ENCODE measurements at regions of chr17 and their contacts with region 1.

Region 1: DNA sequence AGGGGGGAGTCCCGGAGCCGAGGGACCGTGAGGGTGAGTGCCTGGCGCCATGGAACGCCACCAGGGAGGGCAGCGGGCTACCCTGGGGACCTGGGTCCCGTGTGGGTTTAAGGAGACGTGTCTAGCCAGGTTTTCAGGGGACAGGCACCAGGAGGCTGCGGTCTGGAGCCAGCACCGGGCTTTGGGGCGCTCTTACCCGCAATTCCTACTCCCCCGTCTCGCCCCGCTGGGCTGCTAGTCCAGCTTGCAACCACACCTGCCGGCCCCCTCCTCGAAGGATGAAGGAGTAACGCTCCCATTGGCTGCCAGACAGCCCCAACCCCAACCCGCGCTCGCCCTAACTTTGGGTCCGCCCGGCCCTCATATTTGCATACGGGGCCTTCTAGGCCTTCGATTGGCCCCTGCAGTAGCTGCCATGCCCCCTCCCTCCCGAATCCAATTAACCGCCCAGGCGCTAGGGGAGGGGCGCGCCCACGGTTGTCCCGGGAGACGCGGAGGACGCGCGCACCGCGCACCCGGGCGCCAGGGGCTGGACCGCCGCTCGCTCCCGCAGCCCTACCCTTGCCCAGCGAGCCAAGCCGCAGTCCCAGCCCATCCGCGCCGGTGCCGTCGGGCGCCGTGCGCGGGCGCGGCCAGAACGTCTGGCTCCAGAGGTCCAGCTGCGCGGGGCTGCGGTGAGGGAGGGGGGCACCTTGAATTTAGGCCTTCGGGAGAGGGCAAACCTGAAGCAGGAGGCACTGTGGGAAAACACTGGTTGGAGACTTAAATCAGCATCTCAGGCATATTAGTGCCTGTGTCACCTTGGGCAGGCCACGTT is at the start of gene TTLL6:
- DNase-seq: peak; percentile 84
- H3K4me3 ChIP-seq: peak within 1 kb of the TSS; percentile 16 to 48 (median 36)
- H3K27ac ChIP-seq: no peak within 1 kb of the TSS
- H3K4me1 ChIP-seq: peaks cover 6% of the 10 kb centered on the region
- H3K27me3 ChIP-seq: peaks cover 3% of the 10 kb centered on the region
- CTCF ChIP-seq: no peak
- total RNA-seq, gene TTLL6: not detected

Region 2: DNA sequence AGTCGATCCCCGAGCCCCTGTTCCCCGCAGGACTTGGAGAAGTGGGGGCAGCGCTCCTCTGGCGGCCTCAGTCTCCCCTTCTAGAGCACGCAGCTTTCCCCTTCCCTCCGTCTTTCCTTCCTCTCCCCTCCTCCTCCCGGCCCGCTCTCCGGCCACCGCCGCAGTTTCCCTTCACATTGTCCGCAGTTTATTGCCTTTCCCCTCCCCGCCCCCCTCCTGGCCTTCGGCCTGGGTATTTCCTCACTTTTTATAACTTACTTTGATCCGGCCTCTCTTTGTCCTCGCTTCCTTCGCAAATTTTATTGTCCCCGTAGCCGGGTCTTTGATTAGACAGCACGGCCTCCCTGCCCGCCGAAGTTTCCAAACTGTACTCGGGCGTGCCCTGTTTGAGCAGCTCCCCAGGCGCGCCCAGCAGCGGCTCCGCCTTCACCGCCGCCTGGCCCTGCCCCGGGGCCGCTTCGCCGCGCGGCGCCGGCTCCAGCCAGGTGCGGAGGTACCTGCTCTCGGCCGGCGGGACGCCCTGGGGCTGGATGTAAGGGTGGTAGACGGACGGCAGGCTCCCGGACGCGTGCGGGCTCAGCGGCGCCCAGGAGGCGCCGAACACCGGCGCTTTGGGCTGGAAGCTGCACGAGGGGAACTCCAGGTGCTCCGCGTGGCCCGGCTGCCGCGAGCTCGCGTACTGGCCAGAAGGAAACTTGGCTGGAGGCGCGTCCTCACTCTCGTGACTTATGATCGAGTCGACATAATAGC is 191.3 kb before region 1 on chr17:
- CTCF ChIA-PET with region 1: no interaction called
- dilution Hi-C with region 1: no loop called
- in situ Hi-C with region 1: no loop called
- intact Hi-C with region 1: no loop called
- DNase-seq: peak; percentile 56
- H3K4me3 ChIP-seq: peak overlapping the region; percentile 35 to 43 (median 37)
- H3K27ac ChIP-seq: no peak overlapping the region
- H3K4me1 ChIP-seq: peaks cover 14% of the 10 kb centered on the region
- H3K27me3 ChIP-seq: peaks cover 81% of the 10 kb centered on the region
- CTCF ChIP-seq: no peak

Region 3: GRCh38 chr17:48663134-48663924 is 153.7 kb before region 1 on chr17:
- CTCF ChIA-PET with region 1: no interaction called
- dilution Hi-C with region 1: loop called (anchors 5 kb)
- in situ Hi-C with region 1: no loop called
- intact Hi-C with region 1: no loop called
- DNase-seq: no peak
- H3K4me3 ChIP-seq: no peak overlapping the region
- H3K27ac ChIP-seq: no peak overlapping the region
- H3K4me1 ChIP-seq: no peaks in the 10 kb centered on the region
- H3K27me3 ChIP-seq: no peaks in the 10 kb centered on the region
- CTCF ChIP-seq: no peak

Region 4: DNA sequence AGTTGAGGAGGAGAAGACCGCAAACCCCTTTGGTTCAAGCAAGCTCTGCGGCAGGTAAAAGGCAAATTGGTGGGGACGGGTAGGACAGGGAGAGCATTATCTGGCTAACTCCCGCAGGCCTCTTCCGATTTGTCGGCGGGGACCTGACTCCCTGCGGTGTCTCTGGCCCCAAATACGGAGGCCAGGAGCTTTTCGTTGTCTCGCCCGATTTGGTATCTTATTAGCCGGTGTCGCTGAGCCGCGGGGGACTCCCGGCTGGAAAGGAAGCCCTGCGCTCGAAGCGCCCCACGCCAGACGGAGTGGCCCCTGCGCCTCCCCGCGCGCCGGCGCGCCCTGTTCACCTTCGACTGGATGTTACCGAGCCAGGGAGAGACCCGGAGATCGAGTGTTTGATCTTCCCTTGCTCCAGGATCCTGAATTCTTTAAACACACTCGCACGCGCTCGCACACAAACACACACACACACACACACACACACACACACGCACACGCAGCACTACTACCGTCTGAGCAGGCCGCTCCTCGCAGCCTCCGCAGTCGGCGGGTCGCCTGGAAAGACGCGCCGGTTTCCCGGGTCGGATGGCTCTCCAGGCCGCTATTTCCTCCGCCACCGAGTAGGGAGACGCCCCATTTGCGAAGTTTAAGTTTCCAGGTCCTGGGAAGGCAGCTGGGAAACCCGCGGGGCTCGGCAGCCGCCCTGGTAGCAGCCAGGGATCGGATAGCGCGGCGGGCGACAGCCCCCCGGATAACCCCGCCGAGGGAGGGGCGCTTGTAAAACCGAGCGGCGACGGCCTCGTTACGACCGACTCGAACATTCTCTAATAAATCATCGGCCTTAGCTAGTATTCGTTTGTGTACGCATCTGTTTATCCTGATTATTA is 98.0 kb before region 1 on chr17:
- CTCF ChIA-PET with region 1: no interaction called
- dilution Hi-C with region 1: loop called (anchors 5 kb)
- in situ Hi-C with region 1: no loop called
- intact Hi-C with region 1: no loop called
- DNase-seq: no peak
- H3K4me3 ChIP-seq: no peak overlapping the region
- H3K27ac ChIP-seq: no peak overlapping the region
- H3K4me1 ChIP-seq: no peaks in the 10 kb centered on the region
- H3K27me3 ChIP-seq: peaks cover 64% of the 10 kb centered on the region
- CTCF ChIP-seq: no peak

Region 5: DNA sequence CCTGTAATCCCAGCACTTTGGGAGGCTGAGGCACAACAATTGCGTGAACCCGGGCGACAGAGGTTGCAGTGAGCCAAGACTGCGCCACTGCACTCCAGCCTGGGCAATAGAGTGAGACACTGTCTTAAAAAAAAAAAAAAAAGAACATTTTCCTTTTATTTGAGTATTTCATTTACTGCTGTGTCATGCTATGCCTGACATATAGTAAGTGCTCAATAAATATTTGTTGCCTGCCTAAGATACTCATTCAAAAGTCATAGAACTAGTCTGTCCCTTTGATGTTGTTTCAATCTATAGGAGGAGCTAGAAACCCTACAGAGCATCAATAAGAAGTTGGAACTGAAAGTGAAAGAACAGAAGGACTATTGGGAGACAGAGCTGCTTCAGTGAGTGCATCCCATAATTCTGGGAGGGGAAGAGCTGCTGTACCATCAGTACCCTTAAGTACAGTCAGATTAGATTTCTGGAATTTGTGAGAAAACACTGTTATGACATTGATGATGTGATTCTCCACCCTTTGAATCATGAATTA is 33.9 kb after region 1 on chr17:
- CTCF ChIA-PET with region 1: no interaction called
- dilution Hi-C with region 1: loop called (anchors 5 kb)
- in situ Hi-C with region 1: no loop called
- intact Hi-C with region 1: no loop called
- DNase-seq: no peak
- H3K4me3 ChIP-seq: no peak overlapping the region
- H3K27ac ChIP-seq: no peak overlapping the region
- H3K4me1 ChIP-seq: no peaks in the 10 kb centered on the region
- H3K27me3 ChIP-seq: no peaks in the 10 kb centered on the region
- CTCF ChIP-seq: no peak

Region 6: DNA sequence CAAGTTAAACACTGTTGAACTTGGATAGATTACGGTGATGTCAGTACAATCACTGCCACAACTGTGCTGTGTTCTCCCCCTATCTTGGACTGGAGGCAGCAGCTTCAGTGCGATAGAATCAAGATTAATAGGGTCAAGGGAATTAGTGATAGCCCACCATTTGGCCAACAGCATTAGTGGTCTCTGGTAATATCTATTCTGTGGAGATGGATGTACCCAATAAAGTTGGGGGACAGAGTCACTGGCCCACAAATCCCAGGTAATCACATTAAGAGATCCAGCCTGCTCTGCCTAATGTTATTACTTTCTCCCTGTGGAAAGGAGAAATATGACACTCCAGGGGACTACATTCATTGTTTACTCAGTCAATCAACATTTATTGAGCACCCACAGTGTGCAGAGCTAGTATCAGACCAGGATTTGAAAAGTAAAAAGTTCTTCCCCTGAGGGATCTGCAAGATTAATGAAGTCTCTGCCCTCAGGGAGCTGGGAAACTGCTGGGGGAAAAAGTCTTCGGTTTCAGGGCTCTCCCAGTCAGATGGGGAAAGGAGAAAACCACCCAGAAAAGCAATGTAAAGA is 52.0 kb after region 1 on chr17:
- CTCF ChIA-PET with region 1: no interaction called
- dilution Hi-C with region 1: no loop called
- in situ Hi-C with region 1: no loop called
- intact Hi-C with region 1: no loop called
- DNase-seq: no peak
- H3K4me3 ChIP-seq: no peak overlapping the region
- H3K27ac ChIP-seq: no peak overlapping the region
- H3K4me1 ChIP-seq: no peaks in the 10 kb centered on the region
- H3K27me3 ChIP-seq: no peaks in the 10 kb centered on the region
- CTCF ChIP-seq: no peak

Region 7: GRCh38 chr17:48908047-48908843 is 91.3 kb after region 1 on chr17 and contains the start of gene UBE2Z:
- CTCF ChIA-PET with region 1: no interaction called
- dilution Hi-C with region 1: loop called (anchors 10 kb)
- in situ Hi-C with region 1: no loop called
- intact Hi-C with region 1: no loop called
- DNase-seq: peak; percentile 95
- H3K4me3 ChIP-seq: peak within 1 kb of the TSS; percentile 66 to 89 (median 84)
- H3K27ac ChIP-seq: peak within 1 kb of the TSS; percentile 96
- H3K4me1 ChIP-seq: peaks cover 21% of the 10 kb centered on the region
- H3K27me3 ChIP-seq: no peaks in the 10 kb centered on the region
- CTCF ChIP-seq: peak in 1 of 2 donors; percentile 26
- total RNA-seq, gene UBE2Z: 104 to 132 TPM